ENCODE measurements at regions of chr11 and their contacts with region 1.

Region 1: GRCh38 chr11:62694455-62695167 is 5.3 kb upstream of the LRRN4CL start:
- DNase-seq: peak; percentile 82
- CTCF ChIP-seq: peak; percentile 84

Region 2: GRCh38 chr11:62421996-62422395 is 272.6 kb before region 1 on chr11:
- CTCF ChIA-PET with region 1: interaction called, 24 read pairs
- POLR2A ChIA-PET with region 1: no interaction called
- DNase-seq: no peak
- CTCF ChIP-seq: no peak

Region 3: DNA sequence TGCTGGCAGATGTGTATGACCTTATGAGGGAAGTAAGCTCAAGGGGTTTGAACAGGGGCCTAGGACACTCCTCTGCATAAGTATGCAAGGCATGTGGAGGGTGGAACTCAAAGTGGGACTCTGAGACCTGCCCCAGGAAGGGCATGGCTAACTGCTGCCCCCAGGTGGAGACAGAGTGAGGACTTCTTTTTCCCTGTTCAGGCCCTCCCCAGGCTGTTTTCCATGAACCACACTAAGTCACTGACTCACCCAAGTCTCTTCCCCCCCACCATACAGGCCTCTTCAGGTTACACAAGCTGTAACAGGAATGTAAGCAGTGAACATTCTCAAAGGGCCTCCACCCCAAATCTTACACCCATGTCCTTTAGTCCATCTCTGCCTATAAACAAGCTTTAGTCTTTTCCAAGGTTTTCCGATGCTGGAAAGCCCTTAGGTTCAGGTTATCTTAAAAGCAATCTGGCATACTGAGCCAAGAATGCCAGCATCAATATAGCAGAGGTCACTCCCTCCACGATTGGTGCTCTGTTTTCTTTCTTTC is 134.0 kb before region 1 on chr11:
- CTCF ChIA-PET with region 1: no interaction called
- POLR2A ChIA-PET with region 1: no interaction called
- DNase-seq: peak; percentile 42
- CTCF ChIP-seq: peak; percentile 72

Region 4: DNA sequence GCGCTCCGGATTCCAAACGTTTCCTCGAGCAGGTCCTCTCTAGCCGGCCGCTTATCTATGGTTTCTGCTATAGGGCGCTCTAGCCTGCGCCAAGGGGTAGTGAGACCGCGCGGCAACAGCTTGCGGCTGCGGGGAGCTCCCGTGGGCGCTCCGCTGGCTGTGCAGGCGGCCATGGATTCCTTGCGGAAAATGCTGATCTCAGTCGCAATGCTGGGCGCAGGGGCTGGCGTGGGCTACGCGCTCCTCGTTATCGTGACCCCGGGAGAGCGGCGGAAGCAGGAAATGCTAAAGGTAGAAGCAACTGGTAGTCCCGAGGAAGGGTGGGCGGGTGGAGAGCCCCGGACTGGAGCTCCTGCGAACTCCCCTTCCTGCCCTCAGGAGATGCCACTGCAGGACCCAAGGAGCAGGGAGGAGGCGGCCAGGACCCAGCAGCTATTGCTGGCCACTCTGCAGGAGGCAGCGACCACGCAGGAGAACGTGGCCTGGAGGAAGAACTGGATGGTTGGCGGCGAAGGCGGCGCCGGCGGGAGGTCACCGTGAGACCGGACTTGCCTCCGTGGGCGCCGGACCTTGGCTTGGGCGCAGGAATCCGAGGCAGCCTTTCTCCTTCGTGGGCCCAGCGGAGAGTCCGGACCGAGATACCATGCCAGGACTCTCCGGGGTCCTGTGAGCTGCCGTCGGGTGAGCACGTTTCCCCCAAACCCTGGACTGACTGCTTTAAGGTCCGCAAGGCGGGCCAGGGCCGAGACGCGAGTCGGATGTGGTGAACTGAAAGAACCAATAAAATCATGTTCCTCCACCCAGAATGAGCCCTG is 22.8 kb before region 1 on chr11 and contains the starts of genes LBHD1 and UQCC3:
- CTCF ChIA-PET with region 1: interaction called, 34 read pairs
- POLR2A ChIA-PET with region 1: interaction called, 3 read pairs
- DNase-seq: peak; percentile 86
- CTCF ChIP-seq: no peak

Region 5: DNA sequence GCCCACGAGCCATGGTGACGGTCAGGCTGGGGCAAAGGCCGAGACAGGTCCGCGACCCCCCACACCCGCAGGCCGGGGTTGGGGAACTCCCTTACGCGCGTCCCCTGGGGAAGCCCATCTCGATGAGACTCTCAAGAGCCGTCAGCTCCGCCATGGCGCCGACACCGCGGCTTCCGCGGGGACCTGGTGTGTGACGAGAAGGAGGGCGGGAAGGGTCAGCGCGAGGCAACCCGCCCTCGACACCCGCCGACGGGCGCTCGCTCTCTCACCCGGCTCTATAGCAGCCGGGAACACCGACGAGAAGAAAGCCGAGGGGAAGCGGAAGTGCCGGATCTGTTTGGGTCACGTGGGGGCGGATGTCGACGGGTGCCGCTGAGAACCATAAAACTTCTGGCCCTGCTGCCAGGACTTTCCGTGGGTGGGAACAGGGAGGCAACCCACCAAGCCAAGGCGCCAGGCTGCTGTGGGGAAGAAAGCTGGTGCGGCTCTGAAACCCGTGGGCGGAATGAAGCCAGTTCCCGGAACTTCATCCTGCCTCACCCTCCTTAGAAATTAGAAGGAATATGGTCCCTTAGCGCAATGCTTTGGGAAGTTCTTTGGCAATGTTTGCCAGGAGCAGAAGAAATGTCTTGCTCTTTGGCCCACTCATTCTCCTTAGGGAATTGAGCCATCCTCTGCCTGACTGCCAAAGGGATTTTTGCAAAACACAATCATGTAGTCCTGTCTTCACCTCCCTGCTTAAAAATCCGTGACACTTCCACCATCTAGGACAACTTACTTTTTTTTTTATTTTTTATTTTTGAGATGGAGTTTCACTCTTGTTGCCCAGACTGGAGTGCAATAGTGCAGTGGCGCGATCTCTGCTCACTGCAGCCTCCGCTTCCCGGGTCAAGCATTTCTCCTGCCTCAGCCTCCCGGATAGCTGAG is 15.6 kb before region 1 on chr11 and contains the start of gene UBXN1:
- CTCF ChIA-PET with region 1: interaction called, 59 read pairs
- POLR2A ChIA-PET with region 1: no interaction called
- DNase-seq: peak; percentile 93
- CTCF ChIP-seq: no peak

Region 6: DNA sequence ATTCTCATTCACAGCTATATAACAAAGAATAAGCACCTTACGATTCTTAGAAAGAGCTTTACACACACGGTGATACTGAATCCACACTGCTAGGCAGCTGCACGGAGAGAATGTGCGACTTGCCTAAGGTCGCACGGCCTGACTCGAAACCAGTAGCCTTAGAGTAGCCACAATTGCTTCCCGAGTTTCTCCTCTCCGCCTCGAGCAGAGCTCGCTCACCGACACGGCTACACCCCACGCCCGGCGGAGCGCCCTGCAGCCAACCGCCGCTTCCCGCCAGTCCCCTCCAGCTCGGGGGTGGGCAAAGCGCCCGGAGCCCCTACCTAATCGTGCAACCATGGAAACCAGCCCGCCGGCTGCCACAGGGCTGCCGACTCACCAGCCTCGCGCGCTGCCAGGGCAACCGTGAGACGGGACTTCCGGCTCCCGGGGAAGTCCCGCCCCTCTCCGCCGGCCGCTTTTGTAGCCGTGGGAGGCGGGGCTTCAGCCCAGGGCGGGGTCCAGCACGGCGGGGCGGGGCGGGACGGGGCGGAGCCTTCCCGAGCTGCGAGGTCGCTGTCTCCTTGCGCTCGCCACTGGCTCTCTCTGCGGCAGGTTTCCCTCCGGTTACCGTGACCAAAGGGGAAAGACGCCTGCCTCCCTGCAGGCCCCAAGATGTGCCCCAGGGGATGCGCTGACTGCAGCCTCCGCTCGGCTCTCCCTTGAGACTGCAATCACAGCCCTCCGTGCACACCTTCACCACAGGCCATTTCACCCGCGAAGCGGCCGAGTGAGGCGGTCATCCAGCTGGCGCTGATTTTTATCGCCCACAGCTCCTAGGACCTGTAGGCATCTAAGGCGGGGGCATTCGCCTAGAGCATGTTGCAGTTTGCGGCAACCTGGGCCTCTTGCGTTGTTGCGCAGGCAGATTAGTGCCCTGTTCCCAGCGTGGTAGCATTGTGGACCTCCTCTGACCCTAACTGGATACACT is 11.6 kb after region 1 on chr11:
- CTCF ChIA-PET with region 1: interaction called, 79 read pairs
- POLR2A ChIA-PET with region 1: no interaction called
- DNase-seq: peak; percentile 96
- CTCF ChIP-seq: no peak

Region 7: DNA sequence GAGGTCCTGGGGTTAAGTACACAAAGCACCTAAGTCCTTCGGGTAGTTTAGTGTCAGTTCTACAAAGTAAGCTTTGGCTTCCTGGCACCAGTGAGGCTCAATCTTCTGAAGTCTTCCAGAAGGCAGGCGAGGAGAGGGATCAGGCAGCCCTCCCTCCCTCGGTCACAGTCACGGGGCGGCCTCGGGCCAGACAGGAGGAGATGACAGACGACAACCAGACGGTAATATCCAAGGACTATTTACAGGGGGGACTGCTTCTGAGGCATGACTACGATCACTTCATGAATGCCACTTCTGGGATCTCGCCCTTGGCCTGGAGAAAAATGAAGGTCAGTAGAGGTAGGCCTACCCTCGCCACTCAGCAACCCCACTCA is 97.6 kb after region 1 on chr11:
- CTCF ChIA-PET with region 1: no interaction called
- POLR2A ChIA-PET with region 1: interaction called, 10 read pairs
- DNase-seq: no peak
- CTCF ChIP-seq: no peak